CD4-positive, alpha-beta T cell (primary cell): ENCODE measurements at regions of chr3 and their contacts with region 1.

Region 1: DNA sequence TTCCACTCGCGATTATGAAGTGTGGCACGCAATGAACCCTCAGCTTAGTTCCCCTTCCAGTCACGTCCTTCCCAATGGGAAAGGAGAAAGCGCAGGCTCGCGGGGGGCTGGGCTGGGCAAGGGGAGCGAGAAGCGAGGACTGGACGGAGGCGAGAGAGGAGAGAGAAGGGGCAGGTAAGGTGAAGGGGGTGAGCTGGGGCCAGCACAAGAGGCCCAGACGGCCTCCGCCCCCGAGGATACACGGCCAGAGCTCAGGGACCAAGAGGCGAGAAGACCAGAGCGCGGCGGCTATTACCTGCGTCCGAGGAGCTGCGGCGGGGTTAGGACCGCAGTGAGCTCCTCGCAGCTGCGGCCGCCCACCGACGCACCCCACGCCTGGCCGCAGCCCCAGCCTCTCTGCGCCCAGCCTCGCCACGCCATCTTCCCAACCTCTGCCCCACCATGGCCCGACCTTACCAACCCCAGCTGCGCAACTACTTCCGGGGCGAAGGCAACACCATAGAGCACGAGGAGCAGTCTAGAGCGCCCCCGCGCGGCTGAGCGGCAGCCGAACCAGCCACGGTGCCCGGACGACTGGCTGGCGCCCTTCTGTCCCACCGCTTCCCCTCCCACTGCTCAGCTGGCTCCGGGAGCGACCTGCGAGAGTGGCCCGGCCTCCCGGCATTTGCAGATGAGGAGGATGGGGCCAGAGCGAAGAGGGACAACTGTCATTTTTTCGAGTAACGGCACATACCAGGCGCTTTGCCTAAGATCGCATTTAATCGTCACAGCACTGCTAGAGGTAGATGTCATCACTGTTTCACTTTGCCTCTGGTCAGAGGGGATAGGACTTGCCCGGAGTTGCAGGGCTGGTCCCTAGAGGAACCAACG is at the start of gene PARL:
- DNase-seq: peak; percentile 93 to 98 (median 96)
- ATAC-seq: peak; percentile 100
- H3K4me3 ChIP-seq: peak within 1 kb of the TSS; percentile 97
- H3K4me3 Mint-ChIP-seq: peak within 1 kb of the TSS; percentile 97
- H3K27ac ChIP-seq: peak within 1 kb of the TSS; percentile 66
- H3K27ac Mint-ChIP-seq: peak within 1 kb of the TSS; percentile 82
- H3K4me1 ChIP-seq: peaks cover 37% of the 10 kb centered on the region
- H3K4me1 Mint-ChIP-seq: peaks cover 36% of the 10 kb centered on the region
- H3K27me3 ChIP-seq: no peaks in the 10 kb centered on the region
- H3K27me3 Mint-ChIP-seq: no peaks in the 10 kb centered on the region
- CTCF ChIP-seq: peak; percentile 91
- total RNA-seq, gene PARL: 36.9 to 40.0 TPM

Region 2: GRCh38 chr3:183468424-183468823 is 416.2 kb before region 1 on chr3:
- CTCF ChIA-PET with region 1: no interaction called
- POLR2A ChIA-PET with region 1: no interaction called
- intact Hi-C with region 1: loop called in 1 of 2 experiments (anchors 5 kb)
- DNase-seq: no peak
- ATAC-seq: no peak
- H3K4me3 ChIP-seq: no peak overlapping the region
- H3K4me3 Mint-ChIP-seq: no peak overlapping the region
- H3K27ac ChIP-seq: no peak overlapping the region
- H3K27ac Mint-ChIP-seq: no peak overlapping the region
- H3K4me1 ChIP-seq: peaks cover 7% of the 10 kb centered on the region
- H3K4me1 Mint-ChIP-seq: peaks cover 5% of the 10 kb centered on the region
- H3K27me3 ChIP-seq: no peaks in the 10 kb centered on the region
- H3K27me3 Mint-ChIP-seq: no peaks in the 10 kb centered on the region
- CTCF ChIP-seq: no peak

Region 3: DNA sequence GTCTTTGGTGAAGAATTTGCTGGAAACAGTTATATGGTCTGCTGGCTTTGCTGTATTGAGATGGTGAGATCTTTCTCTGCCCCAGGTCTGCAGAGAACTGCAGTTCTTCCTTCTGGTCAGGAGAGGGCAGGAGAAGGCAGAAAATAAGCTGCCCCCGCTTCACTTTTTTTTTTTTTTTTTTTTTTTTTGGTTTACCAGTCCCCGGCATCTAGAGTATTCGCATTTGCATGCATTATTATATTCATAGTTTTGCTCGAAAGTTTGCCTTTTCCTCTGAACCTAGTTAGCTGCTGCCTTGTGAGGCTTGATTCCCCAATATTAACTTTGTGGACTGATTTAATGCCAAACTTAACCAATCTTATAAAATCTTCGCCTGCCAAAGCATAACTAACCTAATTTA is 10.6 kb after region 1 on chr3:
- CTCF ChIA-PET with region 1: interaction called, 24 read pairs
- POLR2A ChIA-PET with region 1: interaction called, 8 read pairs
- intact Hi-C with region 1: no loop called
- DNase-seq: peak in 9 of 14 experiments; percentile 6 to 76 (median 20)
- ATAC-seq: peak; percentile 88
- H3K4me3 ChIP-seq: no peak overlapping the region
- H3K4me3 Mint-ChIP-seq: no peak overlapping the region
- H3K27ac ChIP-seq: no peak overlapping the region
- H3K27ac Mint-ChIP-seq: no peak overlapping the region
- H3K4me1 ChIP-seq: peaks cover 4% of the 10 kb centered on the region
- H3K4me1 Mint-ChIP-seq: no peaks in the 10 kb centered on the region
- H3K27me3 ChIP-seq: peaks cover 5 to 6% of the 10 kb centered on the region in 2 experiments
- H3K27me3 Mint-ChIP-seq: peaks cover 13% of the 10 kb centered on the region
- CTCF ChIP-seq: peak; percentile 75

Region 4: GRCh38 chr3:184117636-184118035 is 233.0 kb after region 1 on chr3:
- CTCF ChIA-PET with region 1: no interaction called
- POLR2A ChIA-PET with region 1: no interaction called
- intact Hi-C with region 1: no loop called
- DNase-seq: no peak
- ATAC-seq: no peak
- H3K4me3 ChIP-seq: no peak overlapping the region
- H3K4me3 Mint-ChIP-seq: no peak overlapping the region
- H3K27ac ChIP-seq: no peak overlapping the region
- H3K27ac Mint-ChIP-seq: no peak overlapping the region
- H3K4me1 ChIP-seq: no peaks in the 10 kb centered on the region
- H3K4me1 Mint-ChIP-seq: no peaks in the 10 kb centered on the region
- H3K27me3 ChIP-seq: peaks cover 0 to under 1% of the 10 kb centered on the region in 2 experiments
- H3K27me3 Mint-ChIP-seq: peaks cover 15% of the 10 kb centered on the region
- CTCF ChIP-seq: no peak

Region 5: DNA sequence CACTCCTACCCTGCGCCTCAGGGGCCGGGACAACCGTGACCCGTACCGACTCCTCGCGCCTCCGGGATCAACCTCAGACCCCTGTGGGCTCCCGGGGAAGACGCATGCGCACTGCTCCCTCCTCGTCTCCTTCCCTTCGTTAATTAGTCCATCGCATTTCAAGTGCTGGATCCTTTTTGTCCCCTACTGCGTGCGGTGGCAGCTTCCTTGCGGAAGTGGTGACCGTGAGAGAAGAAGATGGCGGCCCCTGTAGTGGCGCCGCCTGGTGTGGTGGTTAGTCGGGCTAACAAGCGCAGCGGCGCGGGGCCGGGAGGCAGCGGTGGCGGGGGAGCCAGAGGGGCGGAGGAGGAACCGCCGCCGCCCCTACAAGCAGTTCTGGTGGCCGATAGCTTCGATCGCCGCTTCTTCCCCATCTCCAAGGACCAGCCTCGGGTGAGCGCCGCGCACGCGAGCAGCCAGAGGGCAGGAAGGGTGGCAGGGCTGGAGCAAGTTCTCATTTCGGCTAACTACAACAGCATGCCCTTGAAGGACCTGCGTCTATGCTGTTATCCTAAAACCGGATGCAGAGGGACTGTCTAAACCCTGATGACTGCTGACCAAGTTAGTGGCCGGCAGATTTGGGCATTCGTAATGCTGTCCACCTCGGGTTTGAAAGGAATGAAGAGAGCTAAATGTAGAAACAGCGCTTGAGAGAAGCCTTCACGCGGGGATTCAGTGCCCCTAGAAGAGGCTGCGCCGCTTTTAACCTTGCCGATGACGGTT is 250.7 kb after region 1 on chr3 and contains the start of gene EIF2B5:
- CTCF ChIA-PET with region 1: interaction called, 4 read pairs
- POLR2A ChIA-PET with region 1: interaction called, 4 read pairs
- intact Hi-C with region 1: loop called in 1 of 2 experiments (anchors 5 kb)
- DNase-seq: peak; percentile 72 to 95 (median 82)
- ATAC-seq: peak; percentile 88
- H3K4me3 ChIP-seq: peak within 1 kb of the TSS; percentile 99
- H3K4me3 Mint-ChIP-seq: peak within 1 kb of the TSS; percentile 99
- H3K27ac ChIP-seq: peak within 1 kb of the TSS; percentile 71 to 76
- H3K27ac Mint-ChIP-seq: peak within 1 kb of the TSS; percentile 97
- H3K4me1 ChIP-seq: peaks cover 29% of the 10 kb centered on the region
- H3K4me1 Mint-ChIP-seq: peaks cover 50% of the 10 kb centered on the region
- H3K27me3 ChIP-seq: no peaks in the 10 kb centered on the region
- H3K27me3 Mint-ChIP-seq: no peaks in the 10 kb centered on the region
- CTCF ChIP-seq: peak; percentile 31
- total RNA-seq, gene EIF2B5: 53.6 TPM

Region 6: DNA sequence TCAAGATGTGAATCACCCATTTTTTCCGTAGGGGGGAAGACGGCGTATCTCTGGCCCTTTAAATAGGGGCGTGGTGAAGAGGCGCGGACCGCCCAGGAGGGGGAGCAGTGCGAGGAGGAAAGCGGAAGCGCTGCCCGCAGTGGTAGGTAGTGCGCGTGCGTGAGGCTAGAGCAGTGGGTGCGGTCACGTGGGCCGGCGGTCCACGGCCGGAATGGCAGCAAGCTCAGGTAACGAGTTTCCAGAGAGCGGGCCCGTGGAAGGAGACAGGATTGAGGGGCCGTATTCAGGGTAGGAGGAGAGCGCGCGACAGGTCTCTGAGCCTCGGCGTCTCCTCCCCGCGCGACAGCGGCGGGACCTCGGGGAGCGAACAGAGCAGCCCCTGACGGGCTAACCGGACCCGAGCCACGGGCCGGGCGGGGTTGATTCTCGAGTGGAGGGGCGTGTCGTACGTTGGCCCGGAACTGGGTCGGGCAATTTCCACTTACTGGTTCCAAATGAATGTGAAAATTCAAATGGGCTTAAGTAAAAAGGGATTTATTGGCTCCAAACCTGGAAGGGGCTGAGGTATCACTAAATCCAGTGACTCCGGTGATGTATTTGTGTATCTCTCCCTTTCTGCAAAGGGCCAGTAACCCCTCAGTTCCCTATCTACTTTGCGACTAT is 927.5 kb after region 1 on chr3 and contains the start of gene VPS8:
- CTCF ChIA-PET with region 1: interaction called, 3 read pairs
- POLR2A ChIA-PET with region 1: no interaction called
- intact Hi-C with region 1: loop called in 1 of 2 experiments (anchors 10 kb)
- DNase-seq: peak; percentile 91 to 98 (median 96)
- ATAC-seq: peak; percentile 85
- H3K4me3 ChIP-seq: peak within 1 kb of the TSS; percentile 84
- H3K4me3 Mint-ChIP-seq: peak within 1 kb of the TSS; percentile 95
- H3K27ac ChIP-seq: peak within 1 kb of the TSS; percentile 86 to 87
- H3K27ac Mint-ChIP-seq: peak within 1 kb of the TSS; percentile 90
- H3K4me1 ChIP-seq: peaks cover 28% of the 10 kb centered on the region
- H3K4me1 Mint-ChIP-seq: peaks cover 59% of the 10 kb centered on the region
- H3K27me3 ChIP-seq: no peaks in the 10 kb centered on the region
- H3K27me3 Mint-ChIP-seq: no peaks in the 10 kb centered on the region
- CTCF ChIP-seq: peak; percentile 64
- total RNA-seq, gene VPS8: 56.8 to 61.2 TPM